BJ (cell line): ENCODE measurements at regions of chr21 and their contacts with region 1.

Region 1: GRCh38 chr21:17045214-17045853 is 467.5 kb upstream of the CXADR start:
- DNase-seq: no peak
- H3K4me3 ChIP-seq: no peak overlapping the region
- H3K27me3 ChIP-seq: no peaks in the 10 kb centered on the region
- CTCF ChIP-seq: peak; percentile 57

Region 2: DNA sequence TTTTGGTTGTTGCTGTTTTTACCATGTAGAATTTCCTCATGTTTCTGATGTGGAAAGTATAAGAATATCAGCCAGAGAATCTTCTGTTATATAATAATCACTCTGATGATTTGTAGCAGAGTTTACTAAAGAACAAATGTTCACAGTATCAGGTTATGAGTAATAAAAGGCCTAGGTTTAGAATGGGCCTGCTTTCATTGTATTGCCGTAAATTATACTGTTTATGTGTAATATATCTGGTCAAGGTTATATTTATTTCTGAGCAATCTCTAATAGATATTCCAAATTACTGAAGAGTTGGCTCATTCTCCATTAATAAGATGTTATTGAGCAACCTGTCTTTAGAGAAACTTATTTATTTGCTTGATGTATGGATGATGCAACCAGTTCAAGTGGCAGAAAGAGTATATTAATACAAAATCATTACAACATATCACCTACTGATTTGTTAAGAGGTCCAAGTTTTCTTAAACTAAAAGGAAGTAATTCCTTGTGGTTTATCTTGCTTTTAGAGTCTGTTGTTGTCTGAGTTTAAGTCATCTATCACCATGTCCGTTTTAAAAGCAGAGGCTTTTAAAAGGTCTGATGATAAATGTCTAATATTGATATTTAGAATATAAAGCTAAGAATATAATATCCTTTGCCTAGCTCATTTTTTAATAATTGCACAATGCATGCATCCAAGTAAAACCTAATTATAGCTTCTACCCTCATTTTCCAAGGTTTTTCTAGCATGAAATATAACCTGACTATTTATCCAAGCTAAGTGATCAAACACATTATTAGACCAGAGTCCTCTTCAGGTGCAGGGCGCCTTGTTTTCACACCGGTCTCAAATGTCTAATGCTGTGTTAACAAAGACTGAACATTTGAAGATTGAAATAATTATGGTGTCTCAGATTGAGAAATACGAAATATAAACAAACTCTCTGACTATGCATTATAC is 181.7 kb before region 1 on chr21:
- CTCF ChIA-PET with region 1: no interaction called
- POLR2A ChIA-PET with region 1: no interaction called
- DNase-seq: no peak
- H3K4me3 ChIP-seq: no peak overlapping the region
- H3K27me3 ChIP-seq: no peaks in the 10 kb centered on the region
- CTCF ChIP-seq: no peak

Region 3: GRCh38 chr21:16932314-16932713 is 113.0 kb before region 1 on chr21:
- CTCF ChIA-PET with region 1: no interaction called
- POLR2A ChIA-PET with region 1: interaction called, 20 read pairs
- DNase-seq: no peak
- H3K4me3 ChIP-seq: no peak overlapping the region
- H3K27me3 ChIP-seq: no peaks in the 10 kb centered on the region
- CTCF ChIP-seq: no peak

Region 4: DNA sequence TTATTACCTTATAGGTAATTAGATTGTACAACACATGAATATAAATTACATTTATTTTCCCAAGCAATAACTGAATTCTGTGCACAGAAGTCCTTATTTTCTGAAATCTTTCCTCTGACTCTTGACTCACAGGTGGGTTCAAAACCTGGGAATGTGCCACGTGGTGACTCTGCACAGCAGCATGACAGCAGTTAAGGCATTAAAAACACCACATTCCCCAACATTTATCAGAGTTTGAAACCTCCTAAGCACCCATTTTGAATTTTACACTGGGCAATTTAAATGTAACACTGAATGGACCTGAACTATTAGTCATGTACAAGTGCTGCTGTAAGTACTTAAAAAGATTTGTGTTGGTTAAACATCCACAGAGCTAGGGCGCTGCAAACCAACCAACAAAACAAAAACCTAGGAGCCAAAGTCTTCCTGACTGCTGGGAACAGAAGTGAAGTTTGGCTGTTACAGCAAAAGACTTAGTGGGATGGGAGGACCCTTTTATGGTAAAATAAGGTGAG is 13.1 kb before region 1 on chr21:
- CTCF ChIA-PET with region 1: interaction called, 10 read pairs
- POLR2A ChIA-PET with region 1: interaction called, 3 read pairs
- DNase-seq: no peak
- H3K4me3 ChIP-seq: no peak overlapping the region
- H3K27me3 ChIP-seq: no peaks in the 10 kb centered on the region
- CTCF ChIP-seq: no peak